ENCODE measurements at regions of chr2 and their contacts with region 1.

Region 1: DNA sequence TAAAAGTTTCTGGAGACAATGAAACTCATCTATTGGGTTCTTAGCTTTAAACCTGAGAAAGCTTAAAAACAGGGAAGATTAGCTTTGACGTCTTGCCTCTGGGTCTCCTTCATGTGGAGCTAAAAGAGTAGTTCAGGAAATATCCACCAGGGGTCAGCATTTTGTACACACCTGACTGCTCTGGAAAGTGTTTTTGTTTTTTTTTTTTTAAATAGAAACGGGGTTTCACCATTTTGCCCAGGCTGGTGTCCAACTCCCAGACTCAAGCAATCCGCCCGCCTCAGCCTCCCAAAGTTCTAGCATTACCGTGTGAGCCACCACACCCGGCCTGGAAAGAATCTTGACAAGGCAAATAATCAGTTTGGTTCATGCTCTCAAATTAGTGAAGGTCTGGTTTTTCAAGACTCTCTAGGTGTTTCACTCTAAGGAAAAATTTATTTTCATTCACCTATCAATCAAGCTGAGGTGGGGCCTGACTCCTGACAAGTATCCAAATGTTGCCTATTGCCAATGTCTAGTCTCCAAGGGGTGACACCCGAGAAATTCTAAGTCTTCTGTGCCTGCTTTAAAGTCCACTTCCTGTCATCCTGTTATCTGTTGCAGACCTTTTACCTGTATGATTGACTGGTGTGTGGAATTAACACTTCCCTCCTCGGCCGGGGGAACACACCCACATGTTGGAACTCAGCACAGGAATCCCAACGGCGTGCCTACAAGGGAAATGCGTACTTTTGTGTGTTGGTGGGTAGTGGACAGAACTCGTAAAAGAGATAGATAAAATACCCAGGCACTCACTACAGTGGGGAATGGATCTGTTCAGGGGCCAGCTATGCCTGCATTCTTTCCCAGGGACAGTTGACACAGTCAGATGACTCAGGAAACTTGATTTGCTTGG is 11.3 kb downstream of the IL1RN start:
- DNase-seq: no peak
- H3K4me3 ChIP-seq: no peak overlapping the region
- CTCF ChIP-seq: peak; percentile 54

Region 2: DNA sequence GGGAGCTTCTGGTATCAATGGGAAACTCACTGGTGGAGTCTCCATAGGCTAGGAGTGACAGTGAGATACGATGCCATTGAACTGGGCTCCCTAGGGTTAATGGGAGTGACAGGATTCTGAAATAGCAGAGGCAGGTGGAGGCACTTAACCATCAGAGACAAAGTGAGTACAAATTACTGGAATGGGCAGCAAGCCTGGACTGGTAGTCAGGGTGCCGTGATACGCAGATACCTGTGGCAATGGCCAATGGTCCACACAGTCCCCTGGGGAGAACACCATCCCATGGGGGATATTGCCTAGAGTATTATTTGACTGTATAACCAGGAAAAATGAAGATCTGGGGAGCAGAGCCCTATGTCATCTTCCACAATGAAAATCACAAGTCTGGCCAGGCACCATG is 536.9 kb before region 1 on chr2:
- CTCF ChIA-PET with region 1: no interaction called
- POLR2A ChIA-PET with region 1: no interaction called
- DNase-seq: no peak
- H3K4me3 ChIP-seq: no peak overlapping the region
- CTCF ChIP-seq: no peak

Region 3: GRCh38 chr2:113080134-113080533 is 58.5 kb before region 1 on chr2:
- CTCF ChIA-PET with region 1: interaction called, 44 read pairs
- POLR2A ChIA-PET with region 1: no interaction called
- DNase-seq: no peak
- H3K4me3 ChIP-seq: no peak overlapping the region
- CTCF ChIP-seq: peak; percentile 70

Region 4: GRCh38 chr2:113157118-113157896 is 18.6 kb after region 1 on chr2:
- CTCF ChIA-PET with region 1: interaction called, 77 read pairs
- POLR2A ChIA-PET with region 1: no interaction called
- DNase-seq: no peak
- H3K4me3 ChIP-seq: peak overlapping the region; percentile 50
- CTCF ChIP-seq: no peak

Region 5: GRCh38 chr2:113181258-113182051 is 42.8 kb after region 1 on chr2:
- CTCF ChIA-PET with region 1: interaction called, 33 read pairs
- POLR2A ChIA-PET with region 1: no interaction called
- DNase-seq: no peak
- H3K4me3 ChIP-seq: no peak overlapping the region
- CTCF ChIP-seq: no peak

Region 6: GRCh38 chr2:113211226-113212105 is 72.8 kb after region 1 on chr2:
- CTCF ChIA-PET with region 1: interaction called, 191 read pairs
- POLR2A ChIA-PET with region 1: no interaction called
- DNase-seq: no peak
- H3K4me3 ChIP-seq: no peak overlapping the region
- CTCF ChIP-seq: no peak

Region 7: DNA sequence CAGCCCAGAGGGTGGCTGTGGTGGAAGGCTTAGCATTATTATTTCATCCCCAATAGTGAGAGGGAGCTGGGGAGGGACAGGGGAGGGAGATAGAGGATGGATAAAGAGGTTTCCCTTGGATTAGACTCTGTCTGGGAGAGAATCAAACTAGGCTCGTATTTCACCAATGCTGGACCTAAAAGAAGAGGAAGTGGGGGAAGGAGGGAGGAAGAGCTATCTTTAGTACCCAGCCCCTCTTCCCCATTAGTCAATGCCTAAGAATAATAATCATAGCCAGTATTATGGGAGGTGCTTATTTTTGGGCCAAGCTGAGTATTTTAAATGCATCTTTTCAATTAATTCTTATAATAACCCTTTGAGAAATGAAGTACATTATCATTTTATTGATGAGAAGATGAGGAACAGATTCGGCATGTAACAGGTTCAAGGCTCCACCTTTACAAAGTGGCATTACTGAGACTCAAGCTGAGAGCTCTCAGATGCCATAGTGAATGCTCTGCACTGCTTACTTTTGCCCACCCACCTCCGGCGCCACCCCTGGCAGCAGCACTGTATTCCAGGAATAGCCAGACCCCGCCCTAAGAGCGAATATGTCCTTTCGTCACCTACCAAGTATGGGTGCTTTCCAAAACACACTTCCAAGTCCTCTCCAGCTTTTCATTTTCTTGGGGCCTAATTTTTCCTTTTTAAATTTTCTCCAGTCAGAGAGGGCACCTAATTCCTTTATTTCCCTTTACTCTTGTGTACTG is 119.0 kb after region 1 on chr2:
- CTCF ChIA-PET with region 1: interaction called, 24 read pairs
- POLR2A ChIA-PET with region 1: no interaction called
- DNase-seq: no peak
- H3K4me3 ChIP-seq: no peak overlapping the region
- CTCF ChIP-seq: no peak

Region 8: GRCh38 chr2:113273027-113273551 is 134.4 kb after region 1 on chr2:
- CTCF ChIA-PET with region 1: no interaction called
- POLR2A ChIA-PET with region 1: no interaction called
- DNase-seq: no peak
- H3K4me3 ChIP-seq: no peak overlapping the region
- CTCF ChIP-seq: peak; percentile 20

Region 9: DNA sequence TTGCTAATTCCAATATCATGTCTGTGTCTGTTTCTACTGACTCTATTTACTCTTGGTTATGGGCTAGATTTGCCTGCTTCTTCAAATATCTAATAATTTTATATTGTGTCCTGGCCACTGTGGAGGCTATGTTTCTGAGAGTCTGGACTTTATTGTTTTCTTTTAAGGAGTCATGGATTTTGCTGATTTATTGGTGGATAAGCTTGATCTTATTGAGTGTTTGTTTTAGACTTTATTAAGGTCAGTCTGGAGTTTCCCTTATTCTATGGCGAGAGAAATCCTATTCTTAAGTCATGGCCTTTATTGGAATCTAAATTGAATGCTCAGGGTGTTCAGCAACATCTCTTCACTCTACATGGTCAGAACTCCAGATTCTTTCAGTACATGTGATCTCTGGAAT is 243.8 kb after region 1 on chr2:
- CTCF ChIA-PET with region 1: interaction called, 59 read pairs
- POLR2A ChIA-PET with region 1: no interaction called
- DNase-seq: no peak
- H3K4me3 ChIP-seq: no peak overlapping the region
- CTCF ChIP-seq: no peak